ENCODE measurements at regions of chr14 and their contacts with region 1.

Region 1: DNA sequence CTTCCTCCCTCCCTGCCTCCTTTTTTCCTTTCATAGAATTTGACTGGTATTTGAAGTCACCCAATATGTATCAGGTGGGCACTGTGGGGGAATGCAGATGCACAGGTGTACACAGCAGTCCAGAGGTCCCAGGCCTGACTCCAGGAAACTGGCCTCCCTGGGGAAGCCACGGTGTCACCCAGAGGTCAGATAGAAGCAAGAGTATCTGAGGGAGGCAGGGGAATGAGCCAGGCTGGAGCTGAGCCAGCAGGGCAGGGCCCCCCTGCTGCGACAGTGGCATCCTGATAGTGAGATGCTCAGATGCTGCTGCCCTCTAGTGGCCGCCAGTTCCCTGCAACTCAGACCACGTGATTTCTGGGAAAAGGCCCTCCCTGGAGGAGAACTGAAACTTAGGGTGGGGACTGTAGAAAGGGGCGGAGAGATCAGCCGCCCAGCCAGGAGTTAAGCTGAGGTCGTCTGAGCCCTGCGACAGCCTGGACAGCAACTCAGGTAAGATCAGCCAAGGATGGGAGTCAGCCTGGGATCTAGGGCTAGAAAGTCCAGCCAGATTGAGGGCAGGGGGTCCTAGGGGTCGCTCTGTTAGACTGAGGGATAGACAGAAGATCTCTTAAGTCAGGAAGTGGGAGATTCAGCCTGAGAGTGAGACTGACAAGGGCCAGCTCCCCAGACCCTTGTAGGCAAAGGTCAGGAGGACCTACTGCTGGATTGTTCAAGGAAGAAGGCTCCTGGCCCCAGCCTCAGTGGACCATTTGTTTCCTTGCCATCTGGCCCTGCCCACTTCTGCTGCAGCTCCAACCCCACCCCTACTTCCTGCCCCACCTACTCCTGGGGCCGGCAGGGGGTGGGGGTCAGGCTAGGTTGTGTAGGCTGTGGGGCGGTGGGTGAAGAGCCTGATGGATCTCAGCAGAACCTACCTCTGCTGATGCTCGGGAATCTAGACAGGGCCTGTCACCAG is at the start of gene IRF9:
- DNase-seq: peak; percentile 93 to 98 (median 96)
- ATAC-seq: peak; percentile 98
- H3K4me3 ChIP-seq: peak within 1 kb of the TSS; percentile 89
- H3K4me3 Mint-ChIP-seq: peak within 1 kb of the TSS; percentile 95 to 100 (median 100)
- H3K27ac ChIP-seq: peak within 1 kb of the TSS; percentile 99
- H3K27ac Mint-ChIP-seq: peak within 1 kb of the TSS; percentile 98 to 100 (median 100)
- H3K4me1 ChIP-seq: peaks cover 34 to 45% of the 10 kb centered on the region in 2 donors
- H3K4me1 Mint-ChIP-seq: peaks cover 38 to 69% (median 56%) of the 10 kb centered on the region in 7 donors
- H3K27me3 ChIP-seq: no peaks in the 10 kb centered on the region
- H3K27me3 Mint-ChIP-seq: peaks cover 0 to 4% (median 0%) of the 10 kb centered on the region in 5 donors
- total RNA-seq, gene IRF9: 133 to 337 (median 189) TPM

Region 2: GRCh38 chr14:24080888-24081738 is 80.0 kb before region 1 on chr14:
- CTCF ChIA-PET with region 1: no interaction called
- POLR2A ChIA-PET with region 1: interaction called, 10 read pairs
- intact Hi-C with region 1: no loop called
- DNase-seq: peak; percentile 46 to 75 (median 72)
- ATAC-seq: peak; percentile 92
- H3K4me3 ChIP-seq: peak overlapping the region; percentile 82
- H3K4me3 Mint-ChIP-seq: peak overlapping the region; percentile 80 to 90 (median 86)
- H3K27ac ChIP-seq: peak overlapping the region; percentile 75
- H3K27ac Mint-ChIP-seq: peak overlapping the region; percentile 32 to 92 (median 85)
- H3K4me1 ChIP-seq: peaks cover 7 to 14% of the 10 kb centered on the region in 2 donors
- H3K4me1 Mint-ChIP-seq: peaks cover 16 to 20% (median 18%) of the 10 kb centered on the region in 7 donors
- H3K27me3 ChIP-seq: no peaks in the 10 kb centered on the region
- H3K27me3 Mint-ChIP-seq: peaks cover 0 to 20% (median 0%) of the 10 kb centered on the region in 5 donors

Region 3: GRCh38 chr14:24135834-24136542 is 25.1 kb before region 1 on chr14 and contains the start of gene PSME1:
- CTCF ChIA-PET with region 1: interaction called, 10 read pairs
- POLR2A ChIA-PET with region 1: interaction called, 16 read pairs
- intact Hi-C with region 1: loop called (anchors 1 kb)
- DNase-seq: peak; percentile 88 to 97 (median 92)
- ATAC-seq: peak; percentile 99
- H3K4me3 ChIP-seq: peak within 1 kb of the TSS; percentile 83
- H3K4me3 Mint-ChIP-seq: peak within 1 kb of the TSS; percentile 88 to 95 (median 92)
- H3K27ac ChIP-seq: peak within 1 kb of the TSS; percentile 97
- H3K27ac Mint-ChIP-seq: peak within 1 kb of the TSS; percentile 86 to 98 (median 93)
- H3K4me1 ChIP-seq: peaks cover 16 to 37% of the 10 kb centered on the region in 2 donors
- H3K4me1 Mint-ChIP-seq: peaks cover 48 to 71% (median 64%) of the 10 kb centered on the region in 7 donors
- H3K27me3 ChIP-seq: no peaks in the 10 kb centered on the region
- H3K27me3 Mint-ChIP-seq: no peaks in the 10 kb centered on the region
- total RNA-seq, gene PSME1: 189 to 583 (median 202) TPM

Region 4: GRCh38 chr14:24171422-24172260 is 10.5 kb after region 1 on chr14 and contains the start of gene REC8:
- CTCF ChIA-PET with region 1: interaction called, 3 read pairs
- POLR2A ChIA-PET with region 1: interaction called, 11 read pairs
- intact Hi-C with region 1: loop called (anchors 1 kb)
- DNase-seq: peak in 8 of 9 donors; percentile 43 to 81 (median 76)
- ATAC-seq: peak; percentile 88
- H3K4me3 ChIP-seq: peak within 1 kb of the TSS; percentile 58
- H3K4me3 Mint-ChIP-seq: peak within 1 kb of the TSS; percentile 80 to 94 (median 88)
- H3K27ac ChIP-seq: peak within 1 kb of the TSS; percentile 40
- H3K27ac Mint-ChIP-seq: peak within 1 kb of the TSS; percentile 48 to 93 (median 80)
- H3K4me1 ChIP-seq: peaks cover 0 to 13% of the 10 kb centered on the region in 2 donors
- H3K4me1 Mint-ChIP-seq: peaks cover 12 to 53% (median 43%) of the 10 kb centered on the region in 7 donors
- H3K27me3 ChIP-seq: no peaks in the 10 kb centered on the region
- H3K27me3 Mint-ChIP-seq: no peaks in the 10 kb centered on the region
- total RNA-seq, gene REC8: 20.3 to 80.5 (median 68.6) TPM

Region 5: DNA sequence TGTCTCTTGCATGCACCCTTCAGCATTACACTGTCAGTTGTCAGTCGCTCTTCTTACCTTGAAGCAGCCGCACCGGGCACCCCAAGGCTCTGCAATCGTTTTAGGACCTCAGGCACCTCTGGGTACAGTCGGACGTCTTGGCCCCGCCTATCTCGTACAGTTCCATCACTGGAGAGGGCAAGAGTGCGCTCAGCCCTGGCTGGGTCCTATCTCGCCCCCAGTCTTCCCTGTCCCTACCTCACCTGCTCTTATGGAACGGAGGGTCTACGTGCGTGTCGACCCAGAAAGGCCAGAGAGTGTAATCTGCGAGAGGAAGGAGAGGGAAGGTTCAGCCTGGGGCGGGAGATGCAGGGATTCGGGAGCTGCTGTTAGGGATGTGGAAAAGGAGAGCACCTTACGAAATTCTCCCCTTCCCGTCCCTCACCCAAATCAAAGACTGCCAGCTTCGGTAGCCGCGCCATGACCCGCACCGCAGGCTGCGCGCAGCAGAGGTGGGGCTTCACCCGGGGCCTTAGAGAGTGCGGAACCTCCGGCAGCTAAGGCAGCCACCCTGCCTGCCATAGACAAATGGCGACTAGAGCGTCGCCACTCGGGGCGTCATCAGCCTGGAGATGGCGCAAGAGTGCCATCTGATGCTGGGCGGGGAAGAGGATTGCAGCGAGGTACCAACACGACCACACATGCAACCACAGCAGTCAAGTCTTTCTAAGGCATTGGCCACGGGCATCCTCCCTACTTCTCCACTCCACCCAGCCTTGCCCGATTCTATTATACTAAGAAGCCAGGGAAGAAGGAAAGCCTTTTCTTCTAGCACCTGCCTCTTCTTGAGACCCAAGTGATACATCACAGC is 54.6 kb after region 1 on chr14 and contains the start of gene MDP1:
- CTCF ChIA-PET with region 1: no interaction called
- POLR2A ChIA-PET with region 1: interaction called, 8 read pairs
- intact Hi-C with region 1: loop called (anchors 1 kb)
- DNase-seq: peak; percentile 75 to 89 (median 84)
- ATAC-seq: peak; percentile 85
- H3K4me3 ChIP-seq: peak within 1 kb of the TSS; percentile 95
- H3K4me3 Mint-ChIP-seq: peak within 1 kb of the TSS; percentile 89 to 97 (median 95)
- H3K27ac ChIP-seq: peak within 1 kb of the TSS; percentile 91
- H3K27ac Mint-ChIP-seq: peak within 1 kb of the TSS; percentile 80 to 99 (median 96)
- H3K4me1 ChIP-seq: peaks cover 31 to 36% of the 10 kb centered on the region in 2 donors
- H3K4me1 Mint-ChIP-seq: peaks cover 29 to 62% (median 54%) of the 10 kb centered on the region in 7 donors
- H3K27me3 ChIP-seq: no peaks in the 10 kb centered on the region
- H3K27me3 Mint-ChIP-seq: peaks cover 0 to 2% (median 0%) of the 10 kb centered on the region in 5 donors
- total RNA-seq, gene MDP1: 5.5 to 18.5 (median 14.2) TPM

Region 6: DNA sequence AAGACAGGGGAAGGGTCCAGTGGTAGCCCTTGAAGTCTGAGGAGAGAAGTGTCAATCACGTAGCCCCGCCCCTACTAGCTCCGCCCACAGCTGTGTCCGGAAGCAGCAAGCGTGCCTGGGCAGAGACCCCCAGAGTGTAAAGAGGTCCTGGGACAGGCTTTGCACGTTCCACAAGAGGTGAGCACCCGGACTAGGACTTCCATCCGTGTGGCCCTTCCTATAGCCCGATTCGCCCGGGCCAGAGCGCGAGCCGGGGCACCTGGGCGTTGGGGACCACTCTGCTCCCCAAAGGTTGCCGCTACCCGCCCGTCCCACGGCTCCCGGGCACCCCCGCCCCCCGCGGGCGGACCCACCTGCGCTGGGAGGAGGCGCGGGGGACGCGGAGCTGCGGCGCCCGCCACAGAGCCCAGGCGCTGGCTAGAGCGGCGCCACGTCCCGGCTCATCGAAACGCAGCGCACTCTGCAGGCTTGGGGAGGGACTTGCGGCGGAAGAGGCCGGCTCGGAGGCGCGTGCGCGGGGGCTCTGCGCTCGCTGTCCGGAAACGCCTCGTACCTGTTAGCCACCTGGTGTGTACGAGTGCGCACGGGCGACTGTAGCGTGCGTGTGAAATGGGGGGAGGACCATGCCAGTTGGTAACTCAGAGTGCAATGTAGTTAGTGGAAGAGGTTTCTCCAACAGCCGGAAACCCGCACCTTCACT is 110.2 kb after region 1 on chr14 and contains the start of gene RABGGTA:
- CTCF ChIA-PET with region 1: interaction called, 3 read pairs
- POLR2A ChIA-PET with region 1: no interaction called
- intact Hi-C with region 1: loop called in 1 of 2 experiments (anchors 1 kb)
- DNase-seq: peak; percentile 87 to 97 (median 96)
- ATAC-seq: peak; percentile 91
- H3K4me3 ChIP-seq: peak within 1 kb of the TSS; percentile 80
- H3K4me3 Mint-ChIP-seq: peak within 1 kb of the TSS; percentile 79 to 95 (median 92)
- H3K27ac ChIP-seq: peak within 1 kb of the TSS; percentile 98
- H3K27ac Mint-ChIP-seq: peak within 1 kb of the TSS; percentile 93 to 100 (median 98)
- H3K4me1 ChIP-seq: peaks cover 17 to 23% of the 10 kb centered on the region in 2 donors
- H3K4me1 Mint-ChIP-seq: peaks cover 30 to 52% (median 46%) of the 10 kb centered on the region in 7 donors
- H3K27me3 ChIP-seq: no peaks in the 10 kb centered on the region
- H3K27me3 Mint-ChIP-seq: no peaks in the 10 kb centered on the region
- total RNA-seq, gene RABGGTA: 49.7 to 76.5 (median 55.5) TPM

Region 7: GRCh38 chr14:24442273-24443052 is 281.3 kb after region 1 on chr14 and contains the start of gene SDR39U1:
- CTCF ChIA-PET with region 1: no interaction called
- POLR2A ChIA-PET with region 1: no interaction called
- intact Hi-C with region 1: loop called in 1 of 2 experiments (anchors 1 kb)
- DNase-seq: peak; percentile 81 to 99 (median 98)
- ATAC-seq: peak; percentile 93
- H3K4me3 ChIP-seq: peak within 1 kb of the TSS; percentile 85
- H3K4me3 Mint-ChIP-seq: peak within 1 kb of the TSS; percentile 91 to 98 (median 95)
- H3K27ac ChIP-seq: peak within 1 kb of the TSS; percentile 98
- H3K27ac Mint-ChIP-seq: peak within 1 kb of the TSS; percentile 92 to 99 (median 98)
- H3K4me1 ChIP-seq: peaks cover 20 to 32% of the 10 kb centered on the region in 2 donors
- H3K4me1 Mint-ChIP-seq: peaks cover 27 to 57% (median 49%) of the 10 kb centered on the region in 7 donors
- H3K27me3 ChIP-seq: no peaks in the 10 kb centered on the region
- H3K27me3 Mint-ChIP-seq: peaks cover 0 to 3% (median 0%) of the 10 kb centered on the region in 5 donors
- total RNA-seq, gene SDR39U1: 64.7 to 137 (median 96.2) TPM

Region 8: GRCh38 chr14:24595073-24595808 is 434.1 kb after region 1 on chr14:
- CTCF ChIA-PET with region 1: no interaction called
- POLR2A ChIA-PET with region 1: no interaction called
- intact Hi-C with region 1: no loop called
- DNase-seq: no peak
- ATAC-seq: no peak
- H3K4me3 ChIP-seq: no peak overlapping the region
- H3K4me3 Mint-ChIP-seq: peak overlapping the region in 1 of 10 donors; percentile 17
- H3K27ac ChIP-seq: no peak overlapping the region
- H3K27ac Mint-ChIP-seq: no peak overlapping the region
- H3K4me1 ChIP-seq: no peaks in the 10 kb centered on the region
- H3K4me1 Mint-ChIP-seq: peaks cover 0 to 12% (median 0%) of the 10 kb centered on the region in 7 donors
- H3K27me3 ChIP-seq: no peaks in the 10 kb centered on the region
- H3K27me3 Mint-ChIP-seq: peaks cover 12 to 31% (median 17%) of the 10 kb centered on the region in 5 donors

Measured in naive thymus-derived CD4-positive, alpha-beta T cell (primary cell).